ENCODE measurements at regions of chr17 and their contacts with region 1.

Region 1: DNA sequence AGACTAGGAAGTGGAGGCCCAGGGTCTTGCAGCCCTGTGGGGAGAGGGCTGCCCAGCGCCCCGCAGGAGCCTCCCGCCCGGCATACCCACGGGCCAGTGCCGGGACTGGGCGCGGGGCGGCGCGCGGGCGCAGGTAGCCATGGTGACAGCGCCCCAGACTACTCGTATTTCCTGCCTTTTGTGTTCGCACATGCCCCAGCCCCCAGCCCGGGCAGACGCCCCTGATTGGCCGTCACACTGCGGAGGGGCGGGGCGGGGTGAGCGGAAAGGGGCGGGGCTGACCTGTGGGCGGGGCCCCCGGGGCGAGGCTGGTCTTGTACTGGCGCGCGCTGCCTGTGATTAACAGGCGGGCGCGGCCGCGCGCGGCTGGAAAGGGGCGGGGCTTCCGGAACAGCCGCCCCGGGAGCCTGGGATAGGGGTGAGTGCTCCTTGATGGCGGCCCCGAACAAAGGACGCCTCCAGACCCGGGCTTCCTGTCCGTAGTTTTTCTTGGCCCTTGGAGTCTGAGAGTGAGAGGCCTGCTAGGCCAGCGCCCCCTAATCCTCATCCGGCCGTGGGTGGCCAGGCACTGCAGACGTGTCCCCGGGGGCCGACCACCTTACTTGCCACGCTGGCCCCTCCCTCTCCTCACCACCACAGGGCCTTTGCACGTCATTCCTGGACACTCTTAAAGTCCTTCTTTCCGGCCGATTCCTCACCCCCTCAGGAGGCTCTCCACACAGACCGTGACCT is 71.0 kb downstream of the RAI1 start:
- DNase-seq: peak; percentile 98
- ATAC-seq: peak; percentile 86
- H3K4me3 Mint-ChIP-seq: peak overlapping the region; percentile 95
- H3K27ac Mint-ChIP-seq: peak overlapping the region; percentile 97
- H3K4me1 Mint-ChIP-seq: peaks cover 63% of the 10 kb centered on the region
- H3K27me3 Mint-ChIP-seq: no peaks in the 10 kb centered on the region

Region 2: GRCh38 chr17:17344462-17345293 is 407.6 kb before region 1 on chr17:
- POLR2A ChIA-PET with region 1: no interaction called
- DNase-seq: peak; percentile 21
- ATAC-seq: no peak
- H3K4me3 Mint-ChIP-seq: no peak overlapping the region
- H3K27ac Mint-ChIP-seq: no peak overlapping the region
- H3K4me1 Mint-ChIP-seq: no peaks in the 10 kb centered on the region
- H3K27me3 Mint-ChIP-seq: no peaks in the 10 kb centered on the region

Region 3: GRCh38 chr17:17694169-17695081 is 57.8 kb before region 1 on chr17:
- POLR2A ChIA-PET with region 1: interaction called, 15 read pairs
- DNase-seq: peak; percentile 85
- ATAC-seq: peak; percentile 63
- H3K4me3 Mint-ChIP-seq: peak overlapping the region; percentile 98
- H3K27ac Mint-ChIP-seq: peak overlapping the region; percentile 94
- H3K4me1 Mint-ChIP-seq: peaks cover 63% of the 10 kb centered on the region
- H3K27me3 Mint-ChIP-seq: no peaks in the 10 kb centered on the region

Region 4: DNA sequence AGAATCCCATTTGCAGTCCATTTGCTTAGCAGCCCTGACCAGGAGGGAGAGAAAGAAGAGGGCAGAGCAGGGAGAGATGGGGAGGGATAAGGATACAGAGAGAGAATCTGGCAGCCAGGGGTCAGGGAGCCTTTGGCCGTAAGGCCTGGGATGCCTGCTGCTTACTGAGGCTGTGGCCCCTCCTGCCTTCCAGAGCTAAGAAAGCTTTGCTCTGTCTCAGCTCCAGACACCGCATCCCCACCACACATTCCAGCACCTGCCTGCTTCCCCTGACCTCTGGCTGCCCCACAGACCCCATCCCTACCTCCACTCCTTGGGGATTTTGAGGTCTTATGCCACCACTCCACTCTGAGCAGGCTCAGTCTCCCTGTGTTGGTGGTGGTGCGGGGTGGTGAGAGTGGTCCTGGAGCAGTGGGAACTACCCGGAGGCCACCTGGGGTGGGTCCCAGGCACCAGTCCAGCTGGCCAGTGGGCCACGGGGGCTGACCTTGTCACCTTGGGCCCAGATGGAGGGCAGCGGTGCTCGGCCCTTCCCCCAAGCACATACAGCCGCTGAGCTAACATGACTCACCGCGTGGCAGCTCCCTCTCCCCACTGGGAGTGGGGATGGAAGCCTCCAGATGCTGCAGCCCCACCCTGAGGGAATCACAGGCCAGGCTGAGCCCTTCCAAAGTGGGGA is 12.7 kb before region 1 on chr17:
- POLR2A ChIA-PET with region 1: interaction called, 15 read pairs
- DNase-seq: no peak
- ATAC-seq: no peak
- H3K4me3 Mint-ChIP-seq: no peak overlapping the region
- H3K27ac Mint-ChIP-seq: peak overlapping the region; percentile 57
- H3K4me1 Mint-ChIP-seq: peaks cover 38% of the 10 kb centered on the region
- H3K27me3 Mint-ChIP-seq: no peaks in the 10 kb centered on the region

Region 5: DNA sequence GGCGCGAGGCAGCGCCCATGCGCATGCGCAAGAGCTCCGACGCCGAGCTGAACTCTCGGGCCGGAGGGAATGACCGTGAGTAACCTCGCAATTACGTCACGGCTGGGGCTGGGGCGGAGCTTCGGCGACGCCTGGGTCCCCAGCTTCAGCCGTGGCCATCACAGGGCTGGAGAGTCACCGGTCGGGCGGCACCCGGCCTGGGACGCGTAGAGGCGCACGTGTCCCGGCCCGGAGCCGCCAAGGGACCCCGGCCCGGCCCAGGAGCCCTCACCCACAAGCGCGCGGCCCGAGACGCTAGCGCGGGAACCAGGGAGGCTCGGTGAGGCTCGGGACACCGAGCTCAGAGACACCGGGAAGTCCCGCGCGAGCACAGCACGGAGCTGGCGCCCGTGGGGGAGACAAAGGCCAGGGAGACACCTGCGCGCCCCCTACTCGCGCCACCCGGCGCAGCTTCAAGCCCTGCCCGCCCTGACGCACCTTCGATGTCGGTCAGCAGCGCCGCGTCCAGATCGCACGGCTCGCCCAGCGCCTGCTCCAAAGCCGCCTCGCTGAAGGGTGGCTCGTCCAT is 84.1 kb after region 1 on chr17:
- POLR2A ChIA-PET with region 1: interaction called, 17 read pairs
- DNase-seq: peak; percentile 99
- ATAC-seq: peak; percentile 68
- H3K4me3 Mint-ChIP-seq: peak overlapping the region; percentile 92
- H3K27ac Mint-ChIP-seq: peak overlapping the region; percentile 94
- H3K4me1 Mint-ChIP-seq: peaks cover 69% of the 10 kb centered on the region
- H3K27me3 Mint-ChIP-seq: no peaks in the 10 kb centered on the region